HCT116 (cell line): ENCODE measurements at regions of chr16 and their contacts with region 1.

Region 1: DNA sequence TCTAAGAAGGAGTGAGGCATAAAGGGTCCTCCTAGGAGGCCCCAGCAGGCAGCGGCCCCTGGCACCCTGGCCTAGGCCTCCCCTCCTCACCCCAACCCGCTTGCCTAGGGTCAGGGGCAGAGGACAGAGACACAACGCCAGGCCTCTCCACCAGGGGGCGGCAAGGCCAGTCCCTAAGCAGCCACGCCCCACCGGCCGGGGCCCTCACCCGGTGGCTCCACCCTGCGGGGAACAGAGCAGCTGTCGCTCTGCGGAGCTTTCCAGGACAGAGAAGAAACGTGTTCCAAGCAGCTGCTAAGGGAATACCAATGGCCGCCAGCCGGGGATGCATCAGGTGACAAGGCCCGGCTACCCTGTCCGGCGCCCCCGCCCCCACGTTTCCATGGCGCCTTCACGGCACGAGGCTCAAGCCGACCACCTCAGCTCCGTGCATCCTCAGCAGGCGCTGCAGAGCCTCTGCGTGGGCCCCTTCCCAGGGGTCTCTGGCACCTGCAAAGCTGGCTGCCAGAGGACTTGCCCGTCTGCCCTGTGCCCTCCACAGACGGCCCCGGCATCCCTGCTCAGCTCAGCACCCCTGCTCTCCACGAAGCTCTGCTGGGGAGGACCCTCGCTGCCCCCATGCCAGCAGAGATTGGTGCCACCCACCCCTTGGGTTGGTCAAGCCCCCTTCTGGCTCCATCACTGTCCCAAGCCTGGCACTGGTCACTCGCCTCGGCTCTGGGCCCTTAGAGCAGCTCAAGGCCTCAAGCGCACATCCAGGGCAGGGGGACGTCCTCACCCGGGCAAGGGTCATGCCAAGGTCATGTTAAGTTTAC is 5.6 kb downstream of the ZNF598 start:
- DNase-seq: peak; percentile 87
- ATAC-seq: peak; percentile 91
- H3K4me3 ChIP-seq: no peak overlapping the region
- H3K27ac ChIP-seq: peak overlapping the region; percentile 62; the same call in 1 of the 2 replicates
- H3K4me1 ChIP-seq: peaks cover 23 to 50% of the 10 kb centered on the region in 2 experiments
- H3K27me3 ChIP-seq: no peaks in the 10 kb centered on the region
- CTCF ChIP-seq: peak; percentile 93 to 99 (median 99)
- POLR2A ChIP-seq: no peak
- RAD21 ChIP-seq: peak; percentile 77

Region 2: DNA sequence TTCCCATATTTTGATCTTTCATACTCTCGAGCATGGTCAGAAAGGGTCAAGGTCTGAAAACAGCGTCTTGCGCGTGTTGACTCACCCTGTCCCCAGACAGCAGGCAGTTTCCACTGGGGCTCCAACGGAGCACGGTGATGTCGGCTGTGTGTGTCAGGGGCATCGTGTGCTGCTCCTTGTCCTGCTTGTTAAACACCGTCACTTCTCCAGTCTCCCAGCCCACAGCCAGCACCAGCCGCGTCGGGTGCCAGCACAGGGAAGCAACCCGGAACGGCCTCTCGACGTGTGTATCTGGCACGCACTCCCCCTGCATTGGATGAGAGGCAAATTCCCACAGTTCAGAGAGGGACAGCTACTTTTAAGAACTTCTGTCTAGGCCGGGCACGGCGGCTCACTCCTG is 401.7 kb before region 1 on chr16:
- CTCF ChIA-PET with region 1: no interaction called
- POLR2A ChIA-PET with region 1: no interaction called
- RAD21 ChIA-PET with region 1: no interaction called
- intact Hi-C with region 1: no loop called
- DNase-seq: no peak
- ATAC-seq: no peak
- H3K4me3 ChIP-seq: no peak overlapping the region
- H3K27ac ChIP-seq: no peak overlapping the region
- H3K4me1 ChIP-seq: no peaks in the 10 kb centered on the region
- H3K27me3 ChIP-seq: no peaks in the 10 kb centered on the region
- CTCF ChIP-seq: no peak
- POLR2A ChIP-seq: no peak
- RAD21 ChIP-seq: no peak

Region 3: DNA sequence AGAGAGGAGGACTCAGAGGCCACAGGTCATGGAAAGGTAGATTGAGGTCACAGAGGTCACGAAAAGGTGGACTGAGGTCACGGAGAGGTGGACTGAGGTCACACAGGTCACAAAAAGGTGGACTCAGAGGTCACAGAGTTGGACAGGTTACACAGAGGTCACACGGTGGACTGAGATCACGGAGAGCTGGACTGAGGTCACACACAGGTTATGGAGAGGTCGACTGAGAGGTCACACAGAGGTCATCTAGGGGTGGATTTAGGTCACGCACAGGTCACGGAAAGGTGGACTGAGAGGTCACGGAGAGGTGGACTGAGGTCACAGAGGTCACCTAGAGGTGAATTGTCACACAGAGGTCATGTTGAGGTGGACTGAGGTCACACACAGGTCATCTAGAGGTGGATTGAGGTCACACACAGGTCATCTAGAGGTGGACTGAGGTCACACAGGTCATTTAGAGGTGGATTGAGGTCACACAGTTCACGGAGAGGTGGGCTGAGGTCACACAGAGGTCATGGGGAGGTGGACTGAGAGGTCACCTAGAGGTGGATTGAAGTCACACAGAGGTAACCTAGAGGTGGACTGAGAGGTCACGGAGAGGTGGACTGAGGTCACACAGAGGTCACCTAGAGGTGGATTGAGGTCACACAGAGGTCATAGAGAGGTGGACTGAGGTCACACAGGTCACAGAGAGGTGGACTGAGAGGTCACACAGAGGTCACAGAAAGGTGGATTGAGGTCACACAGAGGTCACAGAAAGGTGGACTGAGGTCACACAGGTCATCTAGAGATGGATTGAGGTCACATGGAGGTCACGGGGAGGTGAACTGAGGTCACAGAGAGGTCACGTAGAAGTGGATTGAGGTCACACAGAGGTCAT is 352.7 kb before region 1 on chr16:
- CTCF ChIA-PET with region 1: no interaction called
- POLR2A ChIA-PET with region 1: no interaction called
- RAD21 ChIA-PET with region 1: no interaction called
- intact Hi-C with region 1: no loop called
- DNase-seq: no peak
- ATAC-seq: peak; percentile 51
- H3K4me3 ChIP-seq: no peak overlapping the region
- H3K27ac ChIP-seq: no peak overlapping the region
- H3K4me1 ChIP-seq: peaks cover 1 to 2% of the 10 kb centered on the region in 2 experiments; a peak in 3 of 4 replicates
- H3K27me3 ChIP-seq: no peaks in the 10 kb centered on the region
- CTCF ChIP-seq: no peak
- POLR2A ChIP-seq: no peak
- RAD21 ChIP-seq: no peak

Region 4: GRCh38 chr16:2016407-2016922 is 12.4 kb after region 1 on chr16:
- CTCF ChIA-PET with region 1: interaction called, 12 read pairs
- POLR2A ChIA-PET with region 1: interaction called, 3 read pairs
- RAD21 ChIA-PET with region 1: no interaction called
- intact Hi-C with region 1: no loop called
- DNase-seq: no peak
- ATAC-seq: no peak
- H3K4me3 ChIP-seq: no peak overlapping the region
- H3K27ac ChIP-seq: no peak overlapping the region; the same call in 1 of the 2 replicates
- H3K4me1 ChIP-seq: peaks cover 24 to 42% of the 10 kb centered on the region in 2 experiments
- H3K27me3 ChIP-seq: no peaks in the 10 kb centered on the region
- CTCF ChIP-seq: peak in 2 of 3 experiments; percentile 68 to 73; a peak in 5 of 6 replicates
- POLR2A ChIP-seq: no peak
- RAD21 ChIP-seq: no peak